ENCODE measurements at regions of chr12 and their contacts with region 1.

Region 1: GRCh38 chr12:53321074-53321814 is at the start of gene AAAS:
- DNase-seq: peak; percentile 76 to 98
- H3K4me3 ChIP-seq: peak within 1 kb of the TSS; percentile 71 to 97 (median 94)
- H3K27ac ChIP-seq: peak within 1 kb of the TSS; percentile 95
- H3K4me1 ChIP-seq: peaks cover 0 to 13% (median 9%) of the 10 kb centered on the region in 4 experiments; a peak in 5 of 7 replicates
- H3K27me3 ChIP-seq: peaks cover 1 to 30% (median 23%) of the 10 kb centered on the region in 4 experiments
- CTCF ChIP-seq: peak; percentile 85 to 99 (median 98)
- EP300 ChIP-seq: no peak
- POLR2A ChIP-seq: peak; percentile 86 to 93
- RAD21 ChIP-seq: peak; percentile 21 to 48; a peak in 2 of 4 replicates
- total RNA-seq, gene AAAS: 66.1 and 68.2 TPM in 2 replicates

Region 2: DNA sequence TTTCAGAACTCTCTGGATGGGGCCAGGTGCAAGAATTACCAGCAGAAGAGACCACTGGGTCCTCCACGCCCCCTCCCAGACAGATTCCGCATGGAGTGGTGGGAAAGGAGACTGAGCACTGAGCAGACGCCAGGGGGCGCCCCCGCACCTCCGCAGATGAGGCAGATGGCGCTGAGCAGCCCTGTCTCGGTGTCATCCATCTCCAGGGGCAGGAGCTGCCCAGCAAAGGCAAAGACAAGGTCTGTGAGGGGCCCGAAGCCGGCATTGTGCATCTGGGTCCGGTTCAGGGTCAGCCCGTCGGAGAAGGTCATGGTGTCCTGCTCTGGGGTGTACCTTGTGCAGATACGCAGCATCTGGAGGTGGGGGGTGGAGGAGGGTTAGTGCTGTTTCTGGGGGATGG is 107.9 kb before region 1 on chr12:
- CTCF ChIA-PET with region 1: interaction called, 52 read pairs
- POLR2A ChIA-PET with region 1: interaction called, 3 read pairs
- DNase-seq: peak in 1 of 2 experiments; percentile 96
- H3K4me3 ChIP-seq: no peak overlapping the region
- H3K27ac ChIP-seq: no peak overlapping the region
- H3K4me1 ChIP-seq: peaks cover 21 to 45% (median 35%) of the 10 kb centered on the region in 4 experiments
- H3K27me3 ChIP-seq: no peaks in the 10 kb centered on the region
- CTCF ChIP-seq: peak in 2 of 3 experiments; percentile 96 to 97; a peak in 3 of 4 replicates
- EP300 ChIP-seq: no peak
- POLR2A ChIP-seq: no peak
- RAD21 ChIP-seq: peak; percentile 98

Region 3: DNA sequence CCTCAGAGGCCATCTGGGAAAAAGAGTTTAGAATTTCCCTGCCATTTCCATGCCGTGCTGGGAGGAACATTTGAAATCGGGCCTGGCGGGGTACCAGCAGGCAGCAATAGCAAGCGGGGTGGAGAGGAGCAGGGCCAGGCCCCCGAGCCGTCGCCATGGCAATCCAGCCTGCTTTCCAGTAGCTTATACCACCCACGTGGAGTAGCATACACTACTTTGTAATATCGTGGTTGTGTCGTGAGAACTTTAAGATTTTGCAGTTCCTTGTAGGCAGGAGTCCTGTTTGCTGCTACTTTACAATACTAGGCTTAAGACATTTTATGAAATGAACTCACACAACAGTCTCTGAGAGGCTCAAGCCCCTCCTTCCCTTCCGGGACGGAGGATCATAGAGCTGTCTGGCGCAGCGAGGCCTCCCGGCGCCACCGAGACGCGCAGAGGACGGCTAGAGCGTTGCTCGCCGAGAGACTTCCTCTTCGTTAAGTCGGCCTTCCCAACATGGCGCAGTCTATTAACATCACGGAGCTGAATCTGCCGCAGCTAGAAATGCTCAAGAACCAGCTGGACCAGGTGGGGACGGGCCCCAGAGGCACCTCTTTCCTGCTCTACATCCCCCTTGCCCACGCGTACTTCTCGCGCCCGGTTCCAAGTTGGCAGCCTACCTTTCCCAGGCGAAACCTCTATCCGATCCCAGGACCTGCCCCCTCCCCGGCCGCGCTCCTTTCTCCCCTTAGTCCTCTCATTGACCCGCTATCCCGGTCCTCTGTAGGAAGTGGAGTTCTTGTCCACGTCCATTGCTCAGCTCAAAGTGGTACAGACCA is 26.0 kb before region 1 on chr12 and contains the start of gene PFDN5:
- CTCF ChIA-PET with region 1: interaction called, 23 read pairs
- POLR2A ChIA-PET with region 1: interaction called, 23 read pairs
- DNase-seq: peak; percentile 61 to 86
- H3K4me3 ChIP-seq: peak within 1 kb of the TSS; percentile 70 to 100 (median 100)
- H3K27ac ChIP-seq: peak within 1 kb of the TSS; percentile 70
- H3K4me1 ChIP-seq: peaks cover 0 to 4% (median 2%) of the 10 kb centered on the region in 4 experiments; a peak in 5 of 7 replicates
- H3K27me3 ChIP-seq: no peaks in the 10 kb centered on the region
- CTCF ChIP-seq: no peak
- EP300 ChIP-seq: no peak
- POLR2A ChIP-seq: peak; percentile 34 to 87
- RAD21 ChIP-seq: no peak
- total RNA-seq, gene PFDN5: 265 and 290 TPM in 2 replicates

Region 4: DNA sequence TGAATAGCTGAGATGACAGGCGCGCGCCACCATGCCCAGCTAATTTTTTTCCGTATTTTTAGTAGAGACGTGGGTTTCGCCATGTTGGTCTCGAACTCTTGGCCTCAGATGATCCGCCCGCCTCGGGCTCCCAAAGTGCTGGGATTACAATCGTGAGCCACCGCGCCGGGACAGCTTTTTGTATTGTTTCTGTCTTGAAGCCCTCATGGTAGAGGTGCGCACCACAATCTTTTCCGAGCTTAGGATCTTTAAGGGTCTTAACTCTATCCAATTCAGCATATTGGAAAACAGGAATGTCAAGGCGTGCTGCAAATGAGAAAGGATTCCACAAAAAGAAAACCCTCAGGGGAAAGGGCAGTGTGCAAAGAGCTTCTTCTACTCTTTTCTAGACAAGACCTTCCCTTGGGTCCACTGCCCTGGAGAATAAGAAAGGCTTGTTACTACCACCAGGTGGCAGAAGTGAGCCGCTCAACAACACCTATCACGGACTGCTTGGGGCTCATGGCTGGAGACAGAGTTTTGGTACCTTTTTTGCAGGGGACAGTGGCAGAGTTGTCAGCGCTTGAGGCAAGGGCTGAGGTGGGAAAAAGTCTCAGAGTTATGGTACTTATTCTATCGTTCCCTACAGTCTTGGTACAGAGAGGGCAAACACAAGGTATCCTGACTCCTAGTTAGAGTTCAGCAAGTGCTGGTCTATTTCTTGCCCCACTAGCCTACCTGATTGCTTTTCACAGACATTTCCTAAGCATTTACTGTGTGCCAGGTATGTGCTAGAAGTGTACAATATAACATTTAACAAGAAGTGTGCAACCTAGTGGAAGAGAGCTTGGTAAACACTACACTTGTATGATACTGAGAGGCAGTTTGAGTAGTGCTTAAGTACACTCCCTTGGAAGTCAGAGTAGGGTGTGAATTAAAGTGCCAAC is 31.4 kb after region 1 on chr12:
- CTCF ChIA-PET with region 1: interaction called, 381 read pairs
- POLR2A ChIA-PET with region 1: interaction called, 3 read pairs
- DNase-seq: peak in 1 of 2 experiments; percentile 85
- H3K4me3 ChIP-seq: no peak overlapping the region
- H3K27ac ChIP-seq: no peak overlapping the region
- H3K4me1 ChIP-seq: no peaks in the 10 kb centered on the region
- H3K27me3 ChIP-seq: no peaks in the 10 kb centered on the region
- CTCF ChIP-seq: peak; percentile 66 to 94 (median 90)
- EP300 ChIP-seq: no peak
- POLR2A ChIP-seq: no peak
- RAD21 ChIP-seq: peak; percentile 91 to 98

Region 5: GRCh38 chr12:53414756-53415417 is 93.6 kb after region 1 on chr12:
- CTCF ChIA-PET with region 1: interaction called, 10 read pairs
- POLR2A ChIA-PET with region 1: interaction called, 3 read pairs
- DNase-seq: no peak
- H3K4me3 ChIP-seq: no peak overlapping the region
- H3K27ac ChIP-seq: no peak overlapping the region
- H3K4me1 ChIP-seq: no peaks in the 10 kb centered on the region; a peak in 1 of 7 replicates
- H3K27me3 ChIP-seq: no peaks in the 10 kb centered on the region
- CTCF ChIP-seq: no peak
- EP300 ChIP-seq: no peak
- POLR2A ChIP-seq: no peak
- RAD21 ChIP-seq: no peak

Region 6: DNA sequence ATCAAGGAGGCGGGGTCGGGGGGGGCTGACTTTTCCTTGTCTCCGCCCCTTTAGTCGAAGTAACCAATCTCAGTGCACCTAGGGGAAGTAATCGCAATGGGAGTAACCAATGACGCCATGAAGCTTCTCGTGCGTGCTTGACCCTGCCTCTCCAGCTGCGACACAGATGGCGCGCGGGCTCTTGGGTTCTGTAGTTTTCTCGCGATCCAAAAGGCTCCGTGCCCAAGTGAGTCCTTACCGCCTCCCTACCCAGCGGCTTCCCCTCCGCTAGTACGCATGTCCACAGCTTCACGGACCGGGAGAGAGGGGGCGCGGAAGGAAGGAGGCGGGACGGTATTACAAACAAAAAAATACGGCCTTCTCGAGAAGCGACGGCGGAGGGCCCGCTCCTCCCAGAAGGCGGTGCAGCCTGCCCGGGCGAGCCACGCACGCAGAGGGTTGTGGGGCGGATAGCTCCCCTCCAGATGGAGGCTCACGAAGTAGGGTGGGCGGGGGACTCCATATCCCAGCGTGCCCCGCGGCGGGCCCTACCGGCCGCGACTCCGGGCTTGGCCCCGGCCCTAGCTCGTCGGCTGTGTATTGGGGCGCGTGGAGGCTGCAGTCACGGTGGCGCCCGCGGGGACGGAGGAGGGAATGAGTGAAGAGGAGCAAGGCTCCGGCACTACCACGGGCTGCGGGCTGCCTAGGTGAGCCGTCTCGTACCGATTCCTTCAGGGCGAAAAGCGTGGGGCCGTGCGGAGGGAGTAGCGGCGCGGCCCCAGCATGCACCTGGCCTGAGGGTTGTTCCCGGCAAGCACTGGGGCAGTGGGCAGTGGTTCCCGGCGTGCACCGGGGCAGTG is 179.8 kb after region 1 on chr12 and contains the start of gene TARBP2:
- CTCF ChIA-PET with region 1: interaction called, 9 read pairs
- POLR2A ChIA-PET with region 1: interaction called, 51 read pairs
- DNase-seq: peak; percentile 95 to 97
- H3K4me3 ChIP-seq: peak within 1 kb of the TSS; percentile 55 to 91 (median 77)
- H3K27ac ChIP-seq: peak within 1 kb of the TSS; percentile 91
- H3K4me1 ChIP-seq: peaks cover 9 to 41% (median 20%) of the 10 kb centered on the region in 4 experiments
- H3K27me3 ChIP-seq: no peaks in the 10 kb centered on the region
- CTCF ChIP-seq: no peak
- EP300 ChIP-seq: 0 out of 3 replicates have a peak, but pooled peaks of 1 of the 2 experiments have one; percentile 12
- POLR2A ChIP-seq: peak; percentile 66 to 86
- RAD21 ChIP-seq: no peak
- total RNA-seq, gene TARBP2: 66.1 and 69.9 TPM in 2 replicates

Measured in H1 (cell line).